ENCODE measurements at regions of chr1 and their contacts with region 1.

Region 1: GRCh38 chr1:54764133-54764921 is at the start of gene PARS2:
- DNase-seq: peak; percentile 98
- ATAC-seq: peak; percentile 99
- H3K4me3 Mint-ChIP-seq: peak within 1 kb of the TSS; percentile 89
- H3K27ac Mint-ChIP-seq: peak within 1 kb of the TSS; percentile 91
- H3K4me1 Mint-ChIP-seq: peaks cover 13% of the 10 kb centered on the region
- H3K27me3 Mint-ChIP-seq: no peaks in the 10 kb centered on the region
- total RNA-seq, gene PARS2: 6.3 to 6.8 TPM

Region 2: GRCh38 chr1:54376430-54377039 is 387.8 kb before region 1 on chr1:
- CTCF ChIA-PET with region 1: no interaction called
- POLR2A ChIA-PET with region 1: no interaction called
- intact Hi-C with region 1: no loop called
- DNase-seq: peak; percentile 62
- ATAC-seq: peak; percentile 77
- H3K4me3 Mint-ChIP-seq: no peak overlapping the region
- H3K27ac Mint-ChIP-seq: peak overlapping the region; percentile 56
- H3K4me1 Mint-ChIP-seq: peaks cover 87% of the 10 kb centered on the region
- H3K27me3 Mint-ChIP-seq: no peaks in the 10 kb centered on the region

Region 3: GRCh38 chr1:54542120-54542961 is 222.0 kb before region 1 on chr1:
- CTCF ChIA-PET with region 1: no interaction called
- POLR2A ChIA-PET with region 1: no interaction called
- intact Hi-C with region 1: loop called in 1 of 2 experiments (anchors 5 kb)
- DNase-seq: peak; percentile 79
- ATAC-seq: peak; percentile 89
- H3K4me3 Mint-ChIP-seq: peak overlapping the region; percentile 74
- H3K27ac Mint-ChIP-seq: peak overlapping the region; percentile 58
- H3K4me1 Mint-ChIP-seq: peaks cover 18% of the 10 kb centered on the region
- H3K27me3 Mint-ChIP-seq: peaks cover 2% of the 10 kb centered on the region

Region 4: GRCh38 chr1:54886724-54887664 is 122.7 kb after region 1 on chr1 and contains the start of gene DHCR24:
- CTCF ChIA-PET with region 1: interaction called, 3 read pairs
- POLR2A ChIA-PET with region 1: interaction called, 3 read pairs
- intact Hi-C with region 1: loop called in 1 of 2 experiments (anchors 1 kb)
- DNase-seq: peak; percentile 88
- ATAC-seq: peak; percentile 96
- H3K4me3 Mint-ChIP-seq: peak within 1 kb of the TSS; percentile 89
- H3K27ac Mint-ChIP-seq: peak within 1 kb of the TSS; percentile 84
- H3K4me1 Mint-ChIP-seq: peaks cover 39% of the 10 kb centered on the region
- H3K27me3 Mint-ChIP-seq: peaks cover 8% of the 10 kb centered on the region
- total RNA-seq, gene DHCR24: 78.4 to 80.6 TPM

Region 5: GRCh38 chr1:55081188-55081904 is 317.0 kb after region 1 on chr1:
- CTCF ChIA-PET with region 1: no interaction called
- POLR2A ChIA-PET with region 1: no interaction called
- intact Hi-C with region 1: no loop called
- DNase-seq: no peak
- ATAC-seq: no peak
- H3K4me3 Mint-ChIP-seq: no peak overlapping the region
- H3K27ac Mint-ChIP-seq: no peak overlapping the region
- H3K4me1 Mint-ChIP-seq: no peaks in the 10 kb centered on the region
- H3K27me3 Mint-ChIP-seq: no peaks in the 10 kb centered on the region

Region 6: GRCh38 chr1:55215256-55216021 is 451.1 kb after region 1 on chr1 and contains the start of gene USP24:
- CTCF ChIA-PET with region 1: no interaction called
- POLR2A ChIA-PET with region 1: no interaction called
- intact Hi-C with region 1: loop called (anchors 1 to 10 kb)
- DNase-seq: peak; percentile 90
- ATAC-seq: peak; percentile 84
- H3K4me3 Mint-ChIP-seq: peak within 1 kb of the TSS; percentile 97
- H3K27ac Mint-ChIP-seq: peak within 1 kb of the TSS; percentile 100
- H3K4me1 Mint-ChIP-seq: peaks cover 55% of the 10 kb centered on the region
- H3K27me3 Mint-ChIP-seq: no peaks in the 10 kb centered on the region
- total RNA-seq, gene USP24: 37.0 to 39.7 TPM

Measured in activated CD4-positive, alpha-beta T cell treated with anti-CD3 and anti-CD28 coated beads for 36 hours (primary cell).